Endothelial cell of umbilical vein (primary cell): ENCODE measurements at regions of chr11 and their contacts with region 1.

Region 1: DNA sequence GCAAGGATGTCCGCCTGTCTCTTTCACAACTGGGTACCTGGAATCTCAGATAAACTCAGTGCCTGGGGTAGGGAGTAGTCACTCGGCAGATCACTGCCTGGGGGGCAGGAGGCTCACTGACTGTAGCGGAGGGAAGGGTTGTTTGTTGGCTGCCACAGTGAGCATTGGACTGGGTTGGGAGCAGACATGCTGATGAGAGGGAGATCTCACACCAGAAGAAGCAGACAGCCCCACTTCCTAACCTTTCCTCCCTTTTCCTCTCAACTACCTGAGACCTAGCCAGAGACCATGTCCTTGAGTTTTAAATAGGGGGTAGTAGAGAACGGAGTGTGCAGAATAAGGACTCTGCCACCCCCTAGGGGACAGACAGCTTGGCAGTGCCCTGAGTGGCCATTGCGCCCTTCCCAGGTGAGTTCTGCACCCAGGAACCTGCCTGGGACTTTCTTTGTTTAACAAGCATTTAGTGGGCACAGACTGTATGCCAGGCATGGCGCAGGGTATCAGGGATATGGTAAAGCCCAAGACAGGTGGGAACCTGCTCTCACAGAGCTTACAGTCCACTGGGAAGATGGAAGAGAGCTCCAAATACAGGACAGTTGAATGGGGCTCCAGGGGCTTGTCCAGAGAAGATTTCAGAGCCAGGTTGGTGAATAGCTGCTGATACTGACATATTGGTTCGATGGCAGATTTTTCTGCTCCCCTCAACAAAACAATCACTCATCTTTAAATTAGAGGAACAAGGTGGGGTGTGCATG is 115.7 kb upstream of the NNMT start:
- DNase-seq: peak; percentile 59
- H3K4me3 ChIP-seq: no peak overlapping the region
- H3K27ac ChIP-seq: peak overlapping the region; percentile 90
- H3K4me1 ChIP-seq: peaks cover 31% of the 10 kb centered on the region
- H3K27me3 ChIP-seq: no peaks in the 10 kb centered on the region
- CTCF ChIP-seq: peak; percentile 52 to 61
- POLR2A ChIP-seq: no peak

Region 2: DNA sequence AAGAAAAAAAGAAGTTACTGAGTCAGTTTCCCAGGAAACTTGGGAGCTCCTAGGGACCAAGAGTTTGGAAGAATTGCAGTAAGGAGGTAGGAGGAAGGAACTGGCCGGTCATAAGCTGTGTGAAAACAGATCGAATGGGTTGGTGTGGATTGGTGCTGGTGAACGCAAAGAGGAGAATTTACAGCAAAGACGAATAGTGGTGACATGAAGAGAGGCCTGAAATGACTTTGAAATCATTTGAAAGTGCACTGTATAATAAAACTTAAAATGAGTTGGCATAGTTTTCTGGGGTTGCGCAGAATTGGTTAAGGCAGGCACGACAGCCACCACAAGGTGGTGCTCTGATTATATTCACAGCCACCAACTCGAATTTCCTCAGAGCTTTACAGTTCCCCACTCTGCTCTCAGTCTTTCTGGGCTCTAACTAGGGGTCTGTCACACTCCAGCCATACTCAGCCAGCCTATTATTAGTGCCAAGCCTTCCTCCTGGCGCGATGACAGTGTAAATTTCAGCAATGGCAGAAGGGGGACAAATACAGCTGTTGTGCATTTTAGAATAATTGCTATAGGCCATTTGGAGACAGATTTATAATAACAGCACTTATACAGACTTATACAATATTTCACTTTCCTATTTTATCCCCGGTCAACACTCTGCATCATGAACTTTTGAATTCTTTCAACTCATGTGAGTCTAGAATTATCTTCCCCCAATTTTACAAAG is 284.2 kb before region 1 on chr11:
- CTCF ChIA-PET with region 1: interaction called, 24 read pairs
- POLR2A ChIA-PET with region 1: no interaction called
- dilution Hi-C with region 1: no loop called
- intact Hi-C with region 1: loop called (anchors 5 kb)
- DNase-seq: peak; percentile 34
- H3K4me3 ChIP-seq: no peak overlapping the region
- H3K27ac ChIP-seq: no peak overlapping the region
- H3K4me1 ChIP-seq: no peaks in the 10 kb centered on the region
- H3K27me3 ChIP-seq: peaks cover 3 to 4% of the 10 kb centered on the region in 2 experiments
- CTCF ChIP-seq: peak; percentile 72 to 76
- POLR2A ChIP-seq: no peak

Region 3: GRCh38 chr11:114036156-114036811 is 144.2 kb before region 1 on chr11:
- CTCF ChIA-PET with region 1: interaction called, 64 read pairs
- POLR2A ChIA-PET with region 1: no interaction called
- dilution Hi-C with region 1: no loop called
- intact Hi-C with region 1: loop called (anchors 1 kb)
- DNase-seq: peak; percentile 73
- H3K4me3 ChIP-seq: peak overlapping the region; percentile 30 to 46 (median 45)
- H3K27ac ChIP-seq: peak overlapping the region; percentile 56
- H3K4me1 ChIP-seq: peaks cover 15% of the 10 kb centered on the region
- H3K27me3 ChIP-seq: peaks cover 0 to 1% of the 10 kb centered on the region in 2 experiments
- CTCF ChIP-seq: peak; percentile 91 to 93
- POLR2A ChIP-seq: no peak

Region 4: GRCh38 chr11:114080219-114080618 is 100.3 kb before region 1 on chr11:
- CTCF ChIA-PET with region 1: interaction called, 10 read pairs
- POLR2A ChIA-PET with region 1: no interaction called
- dilution Hi-C with region 1: no loop called
- intact Hi-C with region 1: loop called (anchors 1 kb)
- DNase-seq: peak; percentile 80
- H3K4me3 ChIP-seq: no peak overlapping the region
- H3K27ac ChIP-seq: peak overlapping the region; percentile 94
- H3K4me1 ChIP-seq: peaks cover 38% of the 10 kb centered on the region
- H3K27me3 ChIP-seq: no peaks in the 10 kb centered on the region
- CTCF ChIP-seq: no peak
- POLR2A ChIP-seq: no peak

Region 5: DNA sequence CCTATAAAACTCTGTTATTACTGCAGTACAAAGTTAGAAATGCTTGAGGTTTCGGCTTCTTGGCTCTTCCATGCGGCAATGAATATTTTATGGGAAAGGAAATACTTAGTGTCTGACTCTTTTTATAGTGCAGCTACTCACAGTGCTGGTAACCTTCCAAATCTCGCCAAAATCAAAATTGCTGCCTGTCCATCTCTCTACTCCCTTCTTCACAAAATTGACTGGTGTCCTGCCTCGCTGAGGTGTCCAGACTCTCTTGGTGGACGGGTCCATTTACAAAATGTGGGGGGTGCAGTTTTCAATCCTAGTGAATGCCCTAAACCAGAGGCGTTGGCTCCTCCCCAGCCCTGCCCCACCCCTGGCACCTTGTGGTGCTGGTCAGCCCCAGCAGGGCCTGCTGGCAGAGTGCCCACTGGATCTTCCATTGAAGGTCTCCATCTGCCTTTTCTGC is 47.5 kb before region 1 on chr11:
- CTCF ChIA-PET with region 1: no interaction called
- POLR2A ChIA-PET with region 1: no interaction called
- dilution Hi-C with region 1: no loop called
- intact Hi-C with region 1: no loop called
- DNase-seq: no peak
- H3K4me3 ChIP-seq: no peak overlapping the region
- H3K27ac ChIP-seq: no peak overlapping the region
- H3K4me1 ChIP-seq: peaks cover 19% of the 10 kb centered on the region
- H3K27me3 ChIP-seq: no peaks in the 10 kb centered on the region
- CTCF ChIP-seq: no peak
- POLR2A ChIP-seq: no peak

Region 6: DNA sequence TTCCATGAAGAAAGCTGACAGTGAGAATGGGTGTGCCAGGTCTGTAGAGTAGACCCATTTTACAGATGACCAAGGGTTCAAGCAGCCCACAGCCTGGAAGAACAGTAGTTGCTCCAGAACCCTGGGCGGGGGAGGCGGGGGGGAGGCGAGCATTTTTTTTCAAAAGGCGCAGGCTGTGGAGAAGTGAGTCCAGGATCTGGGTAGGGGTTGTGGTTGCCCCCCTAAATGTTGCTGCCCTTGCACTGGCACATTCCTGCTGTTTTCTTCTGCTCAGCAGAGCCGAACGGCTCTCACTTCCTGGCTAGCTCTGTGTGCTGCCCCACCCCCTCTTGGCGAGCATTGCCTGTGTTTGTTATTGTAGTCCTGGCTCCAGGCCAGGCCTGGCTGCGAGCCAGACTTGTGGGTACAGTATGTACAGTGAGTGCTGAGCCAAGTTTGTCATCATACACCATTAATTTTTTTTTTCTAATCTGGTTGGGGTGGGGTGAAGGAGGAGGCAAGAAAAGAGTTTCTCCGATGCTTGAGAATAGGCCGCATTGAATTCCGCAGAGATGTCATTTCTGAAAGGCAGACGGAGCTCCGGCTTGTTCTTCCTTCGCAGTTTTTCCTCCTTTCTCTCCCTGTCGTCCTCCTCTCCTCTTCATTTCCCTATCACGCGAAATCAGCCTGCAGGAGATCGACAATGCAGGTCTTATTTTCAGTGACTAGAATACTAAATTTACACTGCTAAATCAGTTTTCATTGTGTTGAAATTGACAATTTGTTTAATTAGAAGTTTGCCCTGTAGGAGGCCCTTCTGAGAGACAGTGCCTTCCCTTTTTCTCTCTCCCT is 20.5 kb before region 1 on chr11:
- CTCF ChIA-PET with region 1: interaction called, 35 read pairs
- POLR2A ChIA-PET with region 1: interaction called, 11 read pairs
- dilution Hi-C with region 1: no loop called
- intact Hi-C with region 1: loop called (anchors 1 kb)
- DNase-seq: peak; percentile 99
- H3K4me3 ChIP-seq: peak overlapping the region in 1 of 3 experiments; percentile 6
- H3K27ac ChIP-seq: peak overlapping the region; percentile 91
- H3K4me1 ChIP-seq: peaks cover 54% of the 10 kb centered on the region
- H3K27me3 ChIP-seq: no peaks in the 10 kb centered on the region
- CTCF ChIP-seq: no peak
- POLR2A ChIP-seq: peak; percentile 73

Region 7: GRCh38 chr11:114197799-114198500 is 17.5 kb after region 1 on chr11:
- CTCF ChIA-PET with region 1: interaction called, 22 read pairs
- POLR2A ChIA-PET with region 1: interaction called, 6 read pairs
- dilution Hi-C with region 1: no loop called
- intact Hi-C with region 1: loop called (anchors 1 kb)
- DNase-seq: peak; percentile 96
- H3K4me3 ChIP-seq: no peak overlapping the region
- H3K27ac ChIP-seq: peak overlapping the region; percentile 83
- H3K4me1 ChIP-seq: peaks cover 26% of the 10 kb centered on the region
- H3K27me3 ChIP-seq: no peaks in the 10 kb centered on the region
- CTCF ChIP-seq: no peak
- POLR2A ChIP-seq: peak; percentile 21

Region 8: GRCh38 chr11:114275280-114275679 is 94.8 kb after region 1 on chr11:
- CTCF ChIA-PET with region 1: no interaction called
- POLR2A ChIA-PET with region 1: no interaction called
- dilution Hi-C with region 1: no loop called
- intact Hi-C with region 1: no loop called
- DNase-seq: no peak
- H3K4me3 ChIP-seq: no peak overlapping the region
- H3K27ac ChIP-seq: no peak overlapping the region
- H3K4me1 ChIP-seq: peaks cover 4% of the 10 kb centered on the region
- H3K27me3 ChIP-seq: peaks cover 19 to 36% of the 10 kb centered on the region in 2 experiments
- CTCF ChIP-seq: no peak
- POLR2A ChIP-seq: no peak

Region 9: GRCh38 chr11:114295676-114296604 is 115.5 kb after region 1 on chr11 and contains the start of gene NNMT:
- CTCF ChIA-PET with region 1: interaction called, 3 read pairs
- POLR2A ChIA-PET with region 1: no interaction called
- dilution Hi-C with region 1: no loop called
- intact Hi-C with region 1: loop called (anchors 1 kb)
- DNase-seq: peak; percentile 97
- H3K4me3 ChIP-seq: peak within 1 kb of the TSS; percentile 85 to 99 (median 96)
- H3K27ac ChIP-seq: peak within 1 kb of the TSS; percentile 100
- H3K4me1 ChIP-seq: peaks cover 70% of the 10 kb centered on the region
- H3K27me3 ChIP-seq: no peaks in the 10 kb centered on the region
- CTCF ChIP-seq: peak in 1 of 2 donors; percentile 11
- POLR2A ChIP-seq: peak; percentile 86
- total RNA-seq, gene NNMT: 300 and 330 TPM in 2 replicates